ENCODE measurements at regions of chr20 and their contacts with region 1.

Region 1: GRCh38 chr20:33531047-33531877 is 41.4 kb downstream of the CBFA2T2 start:
- DNase-seq: no peak
- ATAC-seq: peak; percentile 39
- H3K4me3 ChIP-seq: no peak overlapping the region
- H3K27ac ChIP-seq: no peak overlapping the region
- H3K4me1 ChIP-seq: peaks cover 10% of the 10 kb centered on the region
- H3K27me3 ChIP-seq: no peaks in the 10 kb centered on the region
- CTCF ChIP-seq: no peak

Region 2: DNA sequence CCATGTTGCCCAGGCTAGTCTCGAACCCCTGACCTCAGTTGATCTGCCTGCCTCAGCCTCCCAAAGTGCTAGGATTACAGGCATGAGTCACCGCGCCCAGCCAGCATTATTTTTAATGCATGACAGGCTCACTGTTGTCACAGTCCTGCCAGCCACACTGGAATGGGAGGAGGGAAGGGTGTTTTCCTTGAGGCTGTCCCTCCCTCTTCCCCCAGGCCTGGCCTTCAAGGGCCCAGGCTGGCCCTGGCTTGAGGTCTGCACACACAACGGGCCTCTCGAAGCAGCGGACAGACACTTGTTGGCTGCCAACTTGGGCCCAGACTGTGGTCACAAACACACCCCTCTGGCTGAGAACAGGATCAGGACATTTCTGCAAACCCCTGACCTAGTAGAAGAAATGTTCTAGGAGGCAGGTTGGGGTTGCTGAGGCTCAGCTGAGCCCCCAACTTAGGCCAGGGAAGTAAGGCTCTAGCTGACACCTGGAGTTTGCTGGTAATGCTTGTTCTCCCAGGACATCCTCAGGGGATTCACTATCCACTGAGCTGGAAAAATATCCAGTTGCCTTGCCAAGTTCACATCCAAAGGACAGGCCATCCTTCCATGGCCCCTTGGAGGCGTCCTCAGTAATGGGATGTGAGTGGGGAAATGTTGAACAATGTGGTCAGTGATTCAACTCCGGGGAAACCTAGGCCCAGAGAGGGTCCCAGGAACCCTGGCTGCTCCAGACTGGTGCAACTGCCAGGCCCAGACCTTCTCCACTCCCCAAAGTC is 97.6 kb before region 1 on chr20:
- CTCF ChIA-PET with region 1: no interaction called
- POLR2A ChIA-PET with region 1: interaction called, 28 read pairs
- intact Hi-C with region 1: no loop called
- DNase-seq: no peak
- ATAC-seq: peak; percentile 40; the same call in 1 of the 2 replicates
- H3K4me3 ChIP-seq: no peak overlapping the region
- H3K27ac ChIP-seq: no peak overlapping the region
- H3K4me1 ChIP-seq: no peaks in the 10 kb centered on the region
- H3K27me3 ChIP-seq: no peaks in the 10 kb centered on the region
- CTCF ChIP-seq: no peak

Region 3: DNA sequence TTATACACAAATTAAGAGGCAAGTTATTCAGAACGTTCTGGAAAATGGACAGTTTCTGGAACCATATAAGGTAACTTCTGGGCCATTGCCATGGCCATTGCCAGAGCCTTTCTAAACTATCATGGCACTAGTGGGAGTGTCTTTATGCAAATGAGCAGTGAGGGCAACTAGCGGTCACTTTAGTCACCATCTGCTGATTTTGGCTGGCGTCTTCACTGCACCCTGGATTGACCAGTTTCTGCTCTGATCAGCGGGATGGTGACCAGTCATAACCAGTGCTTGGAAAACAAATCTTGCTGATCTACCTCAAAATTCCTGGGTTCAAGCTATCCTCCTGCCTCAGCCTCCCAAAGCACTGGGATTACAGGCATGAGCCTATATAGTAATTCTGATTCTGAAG is 80.4 kb before region 1 on chr20:
- CTCF ChIA-PET with region 1: no interaction called
- POLR2A ChIA-PET with region 1: no interaction called
- intact Hi-C with region 1: loop called (anchors 10 kb)
- DNase-seq: peak; percentile 74
- ATAC-seq: peak; percentile 61
- H3K4me3 ChIP-seq: no peak overlapping the region
- H3K27ac ChIP-seq: no peak overlapping the region
- H3K4me1 ChIP-seq: peaks cover 6% of the 10 kb centered on the region
- H3K27me3 ChIP-seq: no peaks in the 10 kb centered on the region
- CTCF ChIP-seq: no peak

Region 4: DNA sequence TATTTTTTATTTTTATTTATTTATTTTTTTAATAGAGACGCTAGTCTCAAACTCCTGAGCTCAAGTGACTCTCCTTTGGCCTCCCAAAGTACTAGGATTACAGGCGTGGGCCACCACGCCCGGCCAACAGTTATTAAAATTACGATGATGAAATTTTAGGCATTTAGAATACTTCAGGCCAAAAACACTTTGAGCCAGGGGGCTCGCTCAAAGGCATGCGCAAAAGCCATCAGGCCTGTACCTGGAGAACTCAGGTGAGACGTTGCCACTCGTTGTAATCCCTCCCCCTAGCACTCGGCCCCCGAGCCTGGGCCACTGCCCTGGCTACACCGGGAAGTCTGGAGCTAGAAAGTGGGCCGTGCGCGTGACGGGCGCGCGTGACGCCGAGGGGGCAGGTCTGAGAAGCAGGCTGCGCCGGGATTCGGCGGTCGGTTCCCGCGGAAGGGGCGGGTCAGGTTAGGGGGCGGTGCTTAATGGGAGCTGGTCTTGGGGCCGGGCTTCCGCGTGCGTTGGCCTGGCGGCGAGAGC is 41.7 kb before region 1 on chr20:
- CTCF ChIA-PET with region 1: no interaction called
- POLR2A ChIA-PET with region 1: interaction called, 14 read pairs
- intact Hi-C with region 1: no loop called
- DNase-seq: peak; percentile 98
- ATAC-seq: peak; percentile 96
- H3K4me3 ChIP-seq: peak overlapping the region; percentile 67
- H3K27ac ChIP-seq: peak overlapping the region; percentile 51
- H3K4me1 ChIP-seq: peaks cover 10% of the 10 kb centered on the region; the same call in 1 of the 2 replicates
- H3K27me3 ChIP-seq: no peaks in the 10 kb centered on the region
- CTCF ChIP-seq: no peak

Region 5: GRCh38 chr20:33640297-33640696 is 109.0 kb after region 1 on chr20:
- CTCF ChIA-PET with region 1: no interaction called
- POLR2A ChIA-PET with region 1: no interaction called
- intact Hi-C with region 1: no loop called
- DNase-seq: no peak
- ATAC-seq: no peak
- H3K4me3 ChIP-seq: no peak overlapping the region
- H3K27ac ChIP-seq: no peak overlapping the region
- H3K4me1 ChIP-seq: no peaks in the 10 kb centered on the region
- H3K27me3 ChIP-seq: no peaks in the 10 kb centered on the region
- CTCF ChIP-seq: no peak

Region 6: GRCh38 chr20:33653218-33653899 is 122.1 kb after region 1 on chr20:
- CTCF ChIA-PET with region 1: interaction called, 14 read pairs
- POLR2A ChIA-PET with region 1: no interaction called
- intact Hi-C with region 1: no loop called
- DNase-seq: peak; percentile 69
- ATAC-seq: peak; percentile 66
- H3K4me3 ChIP-seq: no peak overlapping the region
- H3K27ac ChIP-seq: no peak overlapping the region
- H3K4me1 ChIP-seq: peaks cover 29% of the 10 kb centered on the region
- H3K27me3 ChIP-seq: no peaks in the 10 kb centered on the region
- CTCF ChIP-seq: peak; percentile 92